Heart left ventricle (tissue), 16 donors: ENCODE measurements at regions of chr4 and their contacts with region 1.

Region 1: GRCh38 chr4:124427095-124427767 is 285.3 kb downstream of the ANKRD50 start:
- DNase-seq: peak in 4 of 5 donors; percentile 42 to 80 (median 70)
- ATAC-seq: peak; percentile 65 to 91 (median 74)
- H3K4me3 ChIP-seq: no peak overlapping the region
- H3K27ac ChIP-seq: peak overlapping the region in 5 of 12 donors; percentile 4 to 51 (median 26)
- H3K4me1 ChIP-seq: peaks cover 0 to 28% (median 5%) of the 10 kb centered on the region in 12 donors
- H3K27me3 ChIP-seq: no peaks in the 10 kb centered on the region
- CTCF ChIP-seq: no peak
- POLR2A ChIP-seq: no peak

Region 2: GRCh38 chr4:124167602-124168001 is 259.6 kb before region 1 on chr4:
- intact Hi-C with region 1: no loop called
- DNase-seq: peak in 1 of 5 donors; percentile 14
- ATAC-seq: no peak
- H3K4me3 ChIP-seq: no peak overlapping the region
- H3K27ac ChIP-seq: no peak overlapping the region
- H3K4me1 ChIP-seq: no peaks in the 10 kb centered on the region
- H3K27me3 ChIP-seq: no peaks in the 10 kb centered on the region
- CTCF ChIP-seq: no peak
- POLR2A ChIP-seq: no peak

Region 3: DNA sequence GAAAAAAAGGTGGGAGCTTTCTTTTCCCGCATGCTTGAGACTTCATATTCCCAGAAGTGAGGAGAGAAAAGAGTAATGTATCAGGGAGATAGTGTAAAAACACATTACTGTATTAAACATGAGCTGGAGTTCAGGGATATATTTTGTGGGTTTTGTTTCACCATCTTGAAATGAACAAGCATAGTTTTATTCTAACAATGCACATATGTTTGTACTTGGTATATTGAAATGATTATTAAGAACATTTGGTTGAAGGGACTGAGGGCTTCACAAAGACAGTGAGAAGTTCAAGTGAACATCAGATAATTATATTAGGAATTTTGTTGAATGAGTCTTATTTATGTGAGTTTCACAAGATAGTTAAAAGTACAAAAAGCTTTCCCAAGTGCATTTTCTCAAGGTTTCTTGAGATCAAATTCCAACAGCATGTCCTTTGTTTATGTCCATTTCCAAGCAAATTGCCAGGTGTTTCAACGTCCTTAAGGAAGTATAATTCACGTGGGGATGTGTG is 83.5 kb before region 1 on chr4:
- intact Hi-C with region 1: loop called in 1 of 10 experiments (anchors 10 kb)
- DNase-seq: no peak
- ATAC-seq: no peak
- H3K4me3 ChIP-seq: no peak overlapping the region
- H3K27ac ChIP-seq: no peak overlapping the region
- H3K4me1 ChIP-seq: no peaks in the 10 kb centered on the region
- H3K27me3 ChIP-seq: no peaks in the 10 kb centered on the region
- CTCF ChIP-seq: no peak
- POLR2A ChIP-seq: no peak

Region 4: DNA sequence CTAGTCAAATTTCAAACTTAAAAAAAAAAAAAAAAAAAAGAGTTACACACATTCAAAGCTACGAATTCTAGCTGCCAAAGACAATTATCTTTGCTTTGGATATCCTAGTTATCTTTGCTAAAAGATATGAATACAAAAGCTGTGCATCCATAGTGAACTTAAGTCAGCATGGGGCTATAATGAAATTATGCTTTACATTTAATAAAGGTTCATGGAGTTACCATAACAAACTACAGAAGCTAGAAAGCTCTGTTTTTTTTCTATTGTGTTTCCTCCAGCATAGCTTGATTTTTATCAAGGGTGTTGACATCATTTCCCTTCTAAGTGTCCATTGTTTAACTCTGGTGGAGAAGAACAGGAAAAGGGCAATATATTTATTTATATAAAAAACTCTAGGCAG is 51.2 kb after region 1 on chr4:
- intact Hi-C with region 1: loop called in 2 of 10 experiments (anchors 5 kb)
- DNase-seq: no peak
- ATAC-seq: peak in 1 of 4 donors; percentile 80
- H3K4me3 ChIP-seq: no peak overlapping the region
- H3K27ac ChIP-seq: peak overlapping the region in 8 of 12 donors; percentile 11 to 61 (median 28)
- H3K4me1 ChIP-seq: peaks cover 0 to 17% (median 2%) of the 10 kb centered on the region in 12 donors
- H3K27me3 ChIP-seq: no peaks in the 10 kb centered on the region
- CTCF ChIP-seq: no peak
- POLR2A ChIP-seq: no peak

Region 5: DNA sequence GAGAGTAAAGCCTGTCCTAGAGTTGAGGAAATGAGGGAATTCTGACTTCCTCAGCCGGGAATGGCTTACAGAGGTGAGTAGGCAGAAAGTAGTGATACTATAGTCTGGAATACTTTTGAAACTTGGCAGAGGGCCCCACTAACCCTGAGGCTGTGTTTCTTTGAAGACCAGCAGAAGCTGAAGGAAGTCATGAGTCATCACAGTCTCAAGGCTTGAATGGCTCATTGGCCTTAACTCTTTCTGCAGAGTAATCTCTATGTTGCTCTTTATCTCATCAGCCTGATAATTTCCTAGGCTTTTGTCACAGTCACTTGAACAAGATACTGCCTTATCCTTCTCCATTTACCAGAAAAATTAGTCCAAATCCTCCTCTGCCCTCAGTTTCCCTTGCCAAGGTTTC is 204.5 kb after region 1 on chr4:
- intact Hi-C with region 1: loop called in 1 of 10 experiments (anchors 10 kb)
- DNase-seq: peak in 3 of 5 donors; percentile 56 to 73 (median 70)
- ATAC-seq: peak; percentile 67 to 97 (median 91)
- H3K4me3 ChIP-seq: no peak overlapping the region
- H3K27ac ChIP-seq: peak overlapping the region in 1 of 12 donors; percentile 27
- H3K4me1 ChIP-seq: peaks cover 0 to 7% (median 0%) of the 10 kb centered on the region in 12 donors
- H3K27me3 ChIP-seq: no peaks in the 10 kb centered on the region
- CTCF ChIP-seq: no peak
- POLR2A ChIP-seq: no peak

Region 6: GRCh38 chr4:125187226-125188176 is 760.3 kb after region 1 on chr4:
- intact Hi-C with region 1: no loop called
- DNase-seq: peak in 4 of 5 donors; percentile 27 to 54 (median 45)
- ATAC-seq: peak in 1 of 4 donors; percentile 81
- H3K4me3 ChIP-seq: no peak overlapping the region
- H3K27ac ChIP-seq: no peak overlapping the region
- H3K4me1 ChIP-seq: peaks cover 0 to 9% (median 0%) of the 10 kb centered on the region in 12 donors
- H3K27me3 ChIP-seq: no peaks in the 10 kb centered on the region
- CTCF ChIP-seq: no peak
- POLR2A ChIP-seq: no peak